CD8-positive, alpha-beta T cell (primary cell): ENCODE measurements at regions of chr17 and their contacts with region 1.

Region 1: GRCh38 chr17:76014184-76014924 is 12.8 kb downstream of the EVPL start:
- DNase-seq: peak; percentile 52 to 90 (median 81)
- ATAC-seq: peak; percentile 100
- H3K4me3 ChIP-seq: peak overlapping the region in 1 of 2 experiments; percentile 20
- H3K4me3 Mint-ChIP-seq: peak overlapping the region; percentile 64
- H3K27ac ChIP-seq: peak overlapping the region in 1 of 2 experiments; percentile 26
- H3K27ac Mint-ChIP-seq: no peak overlapping the region
- H3K4me1 ChIP-seq: peaks cover 14% of the 10 kb centered on the region
- H3K4me1 Mint-ChIP-seq: peaks cover 14% of the 10 kb centered on the region
- H3K27me3 ChIP-seq: no peaks in the 10 kb centered on the region
- H3K27me3 Mint-ChIP-seq: no peaks in the 10 kb centered on the region
- CTCF ChIP-seq: peak; percentile 94

Region 2: DNA sequence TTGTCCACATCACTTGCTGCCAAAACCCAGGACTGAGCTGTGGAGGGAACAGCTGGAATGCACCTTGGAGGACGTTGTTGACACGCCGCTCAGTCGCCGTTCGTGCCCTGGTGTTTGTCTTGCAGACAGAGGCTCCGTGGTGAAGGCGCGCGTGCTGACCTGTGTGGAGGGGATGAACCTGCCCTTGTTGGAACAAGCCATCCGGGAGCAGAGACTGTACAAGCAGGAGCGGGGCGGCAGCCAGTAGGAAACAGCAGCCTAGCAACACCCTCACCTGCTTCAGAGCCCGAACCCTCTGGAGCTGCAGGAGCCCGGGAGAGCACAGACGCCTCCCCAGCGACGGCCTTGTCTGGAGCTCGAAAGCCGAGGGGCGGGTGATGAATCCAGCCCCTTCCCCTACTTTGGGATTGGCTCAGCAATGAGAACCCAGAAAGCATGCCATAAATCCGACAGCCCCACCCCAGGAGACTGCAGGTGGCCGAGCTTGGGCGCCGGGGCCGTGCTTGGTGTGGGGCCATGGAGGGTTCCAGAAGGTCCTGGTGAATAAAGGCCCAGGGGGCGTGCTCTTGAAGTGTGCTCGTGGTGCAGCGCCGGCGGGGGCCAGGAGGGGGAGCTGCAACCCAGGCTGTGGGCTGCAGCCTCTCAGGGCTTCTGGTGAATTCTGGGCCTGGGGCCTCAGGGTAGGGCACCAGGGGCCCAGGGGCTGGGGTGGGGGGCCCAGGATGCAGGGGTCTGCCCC is 14.2 kb before region 1 on chr17:
- CTCF ChIA-PET with region 1: interaction called, 44 read pairs
- POLR2A ChIA-PET with region 1: interaction called, 3 read pairs
- intact Hi-C with region 1: no loop called
- DNase-seq: peak; percentile 41 to 76 (median 59)
- ATAC-seq: peak; percentile 90
- H3K4me3 ChIP-seq: no peak overlapping the region
- H3K4me3 Mint-ChIP-seq: no peak overlapping the region
- H3K27ac ChIP-seq: no peak overlapping the region
- H3K27ac Mint-ChIP-seq: no peak overlapping the region
- H3K4me1 ChIP-seq: peaks cover 13% of the 10 kb centered on the region
- H3K4me1 Mint-ChIP-seq: peaks cover 11% of the 10 kb centered on the region
- H3K27me3 ChIP-seq: no peaks in the 10 kb centered on the region
- H3K27me3 Mint-ChIP-seq: no peaks in the 10 kb centered on the region
- CTCF ChIP-seq: peak; percentile 81

Region 3: DNA sequence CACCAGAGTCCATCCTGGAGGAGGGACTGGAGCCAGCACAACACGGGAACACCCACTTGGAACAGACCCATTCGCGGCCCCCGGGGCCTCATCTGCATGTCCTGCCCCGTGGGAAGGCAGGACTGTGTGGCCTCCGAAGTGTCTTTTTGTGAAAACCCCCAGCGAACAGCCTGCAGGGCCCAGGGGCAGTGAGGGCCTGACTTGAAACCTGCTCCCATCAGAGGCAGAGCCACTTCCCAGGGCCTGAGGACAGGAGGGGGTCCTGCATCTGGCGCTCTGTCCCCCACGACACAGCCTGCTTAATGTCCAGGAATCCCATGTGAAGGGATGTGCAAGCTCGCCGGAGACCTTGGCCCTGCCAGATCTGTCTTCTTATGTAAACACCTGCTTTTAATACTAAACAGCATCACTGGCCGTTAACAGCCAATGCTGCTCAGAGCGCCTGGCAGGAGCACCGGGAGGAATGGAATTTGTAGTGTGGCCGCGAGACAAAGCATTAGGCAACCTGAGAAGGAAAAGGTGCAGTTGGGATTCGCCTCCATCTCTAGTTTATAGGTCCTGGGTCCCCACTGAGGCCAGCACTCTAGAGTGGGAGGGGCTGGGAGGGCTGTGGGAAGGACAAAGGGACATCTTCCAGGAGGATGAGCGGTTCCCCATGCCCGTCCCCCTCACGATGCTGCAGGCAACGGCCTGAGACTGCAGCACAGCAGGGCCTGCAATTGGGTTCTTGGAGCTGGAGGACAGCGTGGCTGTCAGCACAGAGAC is 22.3 kb after region 1 on chr17:
- CTCF ChIA-PET with region 1: interaction called, 32 read pairs
- POLR2A ChIA-PET with region 1: interaction called, 3 read pairs
- intact Hi-C with region 1: no loop called
- DNase-seq: no peak
- ATAC-seq: no peak
- H3K4me3 ChIP-seq: no peak overlapping the region
- H3K4me3 Mint-ChIP-seq: no peak overlapping the region
- H3K27ac ChIP-seq: no peak overlapping the region
- H3K27ac Mint-ChIP-seq: peak overlapping the region; percentile 37
- H3K4me1 ChIP-seq: peaks cover 16% of the 10 kb centered on the region
- H3K4me1 Mint-ChIP-seq: peaks cover 27% of the 10 kb centered on the region
- H3K27me3 ChIP-seq: no peaks in the 10 kb centered on the region
- H3K27me3 Mint-ChIP-seq: no peaks in the 10 kb centered on the region
- CTCF ChIP-seq: no peak

Region 4: DNA sequence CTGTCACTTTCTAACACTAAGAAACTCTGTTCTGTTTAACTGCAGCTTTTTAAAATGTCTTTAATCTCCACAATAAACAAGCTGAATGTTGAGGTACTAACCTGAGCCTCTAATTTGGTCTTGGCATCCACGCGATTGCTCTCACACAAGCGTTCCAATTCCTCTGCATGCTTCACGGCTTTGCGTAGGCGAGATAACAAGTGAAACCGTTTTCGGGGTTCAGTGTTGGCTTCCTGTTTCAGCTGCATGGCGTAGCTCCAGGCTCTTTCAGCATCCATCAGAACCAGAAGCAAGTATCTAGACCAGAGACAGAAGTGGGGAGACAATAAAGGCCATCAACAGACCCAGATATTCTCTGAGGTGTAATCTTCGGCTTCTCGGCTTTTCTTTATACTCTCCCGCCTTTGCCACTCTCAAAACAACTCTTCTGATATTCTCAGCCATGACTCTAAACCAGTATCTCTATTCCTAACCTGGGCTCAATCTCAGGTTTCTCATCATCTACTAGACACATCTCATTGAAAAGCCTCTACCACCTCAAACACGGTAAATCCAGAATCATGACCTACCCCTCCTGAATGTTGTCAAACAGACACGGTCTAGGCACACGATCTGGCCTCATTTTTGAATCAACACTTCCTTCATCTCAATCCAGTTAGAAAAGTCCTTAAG is 49.7 kb after region 1 on chr17:
- CTCF ChIA-PET with region 1: interaction called, 56 read pairs
- POLR2A ChIA-PET with region 1: no interaction called
- intact Hi-C with region 1: no loop called
- DNase-seq: peak in 2 of 9 experiments; percentile 33 to 50
- ATAC-seq: peak; percentile 55
- H3K4me3 ChIP-seq: no peak overlapping the region
- H3K4me3 Mint-ChIP-seq: peak overlapping the region; percentile 35
- H3K27ac ChIP-seq: peak overlapping the region in 1 of 2 experiments; percentile 46
- H3K27ac Mint-ChIP-seq: peak overlapping the region; percentile 81
- H3K4me1 ChIP-seq: no peaks in the 10 kb centered on the region
- H3K4me1 Mint-ChIP-seq: peaks cover 14% of the 10 kb centered on the region
- H3K27me3 ChIP-seq: no peaks in the 10 kb centered on the region
- H3K27me3 Mint-ChIP-seq: no peaks in the 10 kb centered on the region
- CTCF ChIP-seq: no peak

Region 5: DNA sequence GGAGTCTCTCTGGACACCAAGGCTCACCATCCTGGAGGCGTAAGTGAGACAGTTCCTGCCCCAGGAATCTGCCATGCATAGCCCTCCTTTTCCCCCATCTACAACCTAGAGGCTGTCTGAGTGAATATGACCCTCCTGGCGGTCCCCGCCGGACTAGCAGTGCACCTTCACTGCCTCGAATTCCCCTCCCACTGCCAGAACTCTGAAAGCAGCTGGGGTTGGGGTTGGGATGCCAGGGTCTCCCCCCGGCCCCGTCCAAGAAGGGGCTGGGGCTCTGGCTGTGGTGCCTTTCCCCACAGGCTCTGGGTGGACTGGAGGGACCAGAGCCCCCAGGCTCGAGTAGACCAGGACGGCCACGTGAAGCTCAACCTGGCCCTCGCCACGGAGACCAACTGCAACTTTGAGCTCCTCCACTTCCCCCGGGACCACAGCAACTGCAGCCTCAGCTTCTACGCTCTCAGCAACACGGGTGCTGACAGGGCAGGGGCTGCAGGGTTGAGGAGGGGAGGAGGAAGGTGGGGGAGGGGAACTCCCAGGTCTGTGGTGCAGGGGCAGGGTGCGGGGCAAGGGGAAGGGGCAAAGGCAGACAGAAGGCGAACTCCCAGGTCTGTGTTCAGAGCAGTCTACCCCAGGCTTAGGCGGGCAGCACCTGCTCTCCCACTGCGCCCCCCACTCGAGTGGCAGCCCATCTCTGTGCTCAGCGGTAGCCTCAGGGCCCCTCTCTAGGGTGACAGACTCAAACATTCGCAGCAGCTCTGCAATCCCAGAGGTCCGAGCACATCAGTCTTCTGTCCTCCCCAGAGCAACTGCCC is 65.8 kb after region 1 on chr17:
- CTCF ChIA-PET with region 1: interaction called, 32 read pairs
- POLR2A ChIA-PET with region 1: interaction called, 9 read pairs
- intact Hi-C with region 1: no loop called
- DNase-seq: peak in 1 of 9 experiments; percentile 45
- ATAC-seq: peak; percentile 30
- H3K4me3 ChIP-seq: no peak overlapping the region
- H3K4me3 Mint-ChIP-seq: no peak overlapping the region
- H3K27ac ChIP-seq: no peak overlapping the region
- H3K27ac Mint-ChIP-seq: peak overlapping the region; percentile 74
- H3K4me1 ChIP-seq: peaks cover 50% of the 10 kb centered on the region
- H3K4me1 Mint-ChIP-seq: peaks cover 43% of the 10 kb centered on the region
- H3K27me3 ChIP-seq: peaks cover 8 to 20% of the 10 kb centered on the region in 2 experiments
- H3K27me3 Mint-ChIP-seq: peaks cover 11% of the 10 kb centered on the region
- CTCF ChIP-seq: no peak

Region 6: GRCh38 chr17:76121932-76122430 is 107.6 kb after region 1 on chr17:
- CTCF ChIA-PET with region 1: interaction called, 7 read pairs
- POLR2A ChIA-PET with region 1: no interaction called
- intact Hi-C with region 1: loop called in 1 of 2 experiments (anchors 1 kb)
- DNase-seq: peak in 3 of 9 experiments; percentile 23 to 63 (median 48)
- ATAC-seq: peak; percentile 10
- H3K4me3 ChIP-seq: peak overlapping the region; percentile 47 to 49
- H3K4me3 Mint-ChIP-seq: peak overlapping the region; percentile 37
- H3K27ac ChIP-seq: peak overlapping the region in 1 of 2 experiments; percentile 27
- H3K27ac Mint-ChIP-seq: no peak overlapping the region
- H3K4me1 ChIP-seq: peaks cover 33% of the 10 kb centered on the region
- H3K4me1 Mint-ChIP-seq: peaks cover 20% of the 10 kb centered on the region
- H3K27me3 ChIP-seq: no peaks in the 10 kb centered on the region
- H3K27me3 Mint-ChIP-seq: no peaks in the 10 kb centered on the region
- CTCF ChIP-seq: no peak

Region 7: GRCh38 chr17:76296186-76296585 is 281.8 kb after region 1 on chr17:
- CTCF ChIA-PET with region 1: interaction called, 41 read pairs
- POLR2A ChIA-PET with region 1: no interaction called
- intact Hi-C with region 1: loop called in 1 of 2 experiments (anchors 1 kb)
- DNase-seq: no peak
- ATAC-seq: no peak
- H3K4me3 ChIP-seq: no peak overlapping the region
- H3K4me3 Mint-ChIP-seq: no peak overlapping the region
- H3K27ac ChIP-seq: no peak overlapping the region
- H3K27ac Mint-ChIP-seq: no peak overlapping the region
- H3K4me1 ChIP-seq: no peaks in the 10 kb centered on the region
- H3K4me1 Mint-ChIP-seq: peaks cover 1% of the 10 kb centered on the region
- H3K27me3 ChIP-seq: no peaks in the 10 kb centered on the region
- H3K27me3 Mint-ChIP-seq: no peaks in the 10 kb centered on the region
- CTCF ChIP-seq: no peak